MCF 10A (cell line): ENCODE measurements at regions of chr16 and their contacts with region 1.

Region 1: DNA sequence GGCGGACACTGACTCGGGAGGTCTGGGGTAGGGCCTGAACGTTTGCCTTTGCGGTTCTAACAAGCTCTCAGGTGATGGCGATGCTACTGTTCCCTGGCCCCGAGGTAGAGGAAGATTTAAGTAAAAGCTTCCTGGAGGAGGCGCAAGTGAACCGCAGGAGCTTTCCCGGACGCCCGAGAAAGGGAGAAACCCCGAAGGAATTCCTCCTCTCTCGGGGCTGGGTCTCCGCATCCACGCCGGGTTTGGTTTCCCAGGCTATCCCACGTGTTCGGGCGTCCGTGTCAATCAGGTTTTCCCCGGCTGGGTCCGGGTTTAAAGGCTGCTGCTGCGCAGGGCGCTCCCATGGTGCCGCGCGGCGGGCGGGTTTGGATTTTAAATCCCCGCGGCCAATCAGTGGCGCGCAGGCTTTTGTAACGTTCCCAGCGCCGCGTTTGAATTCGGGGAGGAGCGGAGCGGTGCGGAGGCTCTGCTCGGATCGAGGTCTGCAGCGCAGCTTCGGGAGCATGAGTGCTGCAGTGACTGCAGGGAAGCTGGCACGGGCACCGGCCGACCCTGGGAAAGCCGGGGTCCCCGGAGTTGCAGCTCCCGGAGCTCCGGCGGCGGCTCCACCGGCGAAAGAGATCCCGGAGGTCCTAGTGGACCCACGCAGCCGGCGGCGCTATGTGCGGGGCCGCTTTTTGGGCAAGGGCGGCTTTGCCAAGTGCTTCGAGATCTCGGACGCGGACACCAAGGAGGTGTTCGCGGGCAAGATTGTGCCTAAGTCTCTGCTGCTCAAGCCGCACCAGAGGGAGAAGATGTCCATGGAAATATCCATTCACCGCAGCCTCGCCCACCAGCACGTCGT is at the start of gene PLK1:
- DNase-seq: peak; percentile 94
- H3K4me3 Mint-ChIP-seq: peak within 1 kb of the TSS; percentile 87
- H3K27ac Mint-ChIP-seq: peak within 1 kb of the TSS; percentile 85
- H3K4me1 Mint-ChIP-seq: peaks cover 25% of the 10 kb centered on the region
- H3K27me3 Mint-ChIP-seq: no peaks in the 10 kb centered on the region
- CTCF ChIP-seq: peak; percentile 32
- total RNA-seq, gene PLK1: 50.7 and 74.8 TPM in 2 replicates

Region 2: DNA sequence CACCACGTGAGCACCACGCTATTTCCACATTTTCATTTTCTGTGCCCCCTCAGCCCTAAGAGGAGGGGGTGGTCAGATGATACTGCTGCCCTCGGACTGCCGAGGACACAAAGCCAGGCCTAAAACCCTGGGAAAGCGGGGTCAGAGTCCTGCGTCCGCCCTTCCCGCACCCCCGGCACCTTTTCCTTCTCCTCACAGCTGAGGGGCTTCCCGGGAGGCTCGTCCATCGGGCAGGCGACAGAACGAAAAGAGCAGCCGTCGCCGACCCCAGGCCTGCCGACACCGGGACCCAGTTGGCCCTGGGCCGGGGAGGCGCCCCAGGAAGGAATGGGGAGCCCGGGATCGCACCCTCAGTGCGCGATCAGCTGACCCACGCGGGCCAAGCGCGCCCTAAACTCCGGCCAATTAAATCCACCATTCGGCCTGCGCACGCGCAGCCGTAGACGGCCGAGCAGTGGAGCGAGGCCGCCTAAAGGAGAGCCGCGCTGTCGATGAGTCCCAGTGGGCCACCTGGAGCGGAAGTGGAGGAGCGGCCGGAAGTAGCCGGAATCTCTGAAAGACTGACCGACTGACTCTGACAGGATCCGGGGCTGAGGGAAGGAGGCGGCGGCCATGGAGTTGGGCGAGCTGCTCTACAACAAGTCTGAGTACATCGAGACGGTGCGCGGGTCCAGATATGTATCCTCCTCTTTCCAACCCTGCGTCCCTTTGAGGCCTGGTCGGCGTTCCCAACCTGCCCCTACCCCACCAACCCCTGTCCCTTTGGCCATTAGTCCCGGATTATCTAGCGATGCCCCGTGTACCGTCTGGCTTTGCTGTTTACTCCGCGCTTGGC is 37.5 kb before region 1 on chr16 and contains the starts of genes DCTN5 and PALB2:
- CTCF ChIA-PET with region 1: interaction called, 3 read pairs
- POLR2A ChIA-PET with region 1: interaction called, 13 read pairs
- intact Hi-C with region 1: no loop called
- DNase-seq: peak; percentile 95
- H3K4me3 Mint-ChIP-seq: peak within 1 kb of the TSS; percentile 91
- H3K27ac Mint-ChIP-seq: peak within 1 kb of the TSS; percentile 91
- H3K4me1 Mint-ChIP-seq: peaks cover 12% of the 10 kb centered on the region
- H3K27me3 Mint-ChIP-seq: no peaks in the 10 kb centered on the region
- CTCF ChIP-seq: no peak
- total RNA-seq, gene DCTN5: 66.6 and 84.8 TPM in 2 replicates
- total RNA-seq, gene PALB2: 13.7 and 20.8 TPM in 2 replicates

Region 3: GRCh38 chr16:23668225-23668624 is 10.4 kb before region 1 on chr16:
- CTCF ChIA-PET with region 1: interaction called, 20 read pairs
- POLR2A ChIA-PET with region 1: interaction called, 6 read pairs
- intact Hi-C with region 1: no loop called
- DNase-seq: no peak
- H3K4me3 Mint-ChIP-seq: no peak overlapping the region
- H3K27ac Mint-ChIP-seq: no peak overlapping the region
- H3K4me1 Mint-ChIP-seq: no peaks in the 10 kb centered on the region
- H3K27me3 Mint-ChIP-seq: no peaks in the 10 kb centered on the region
- CTCF ChIP-seq: no peak

Region 4: DNA sequence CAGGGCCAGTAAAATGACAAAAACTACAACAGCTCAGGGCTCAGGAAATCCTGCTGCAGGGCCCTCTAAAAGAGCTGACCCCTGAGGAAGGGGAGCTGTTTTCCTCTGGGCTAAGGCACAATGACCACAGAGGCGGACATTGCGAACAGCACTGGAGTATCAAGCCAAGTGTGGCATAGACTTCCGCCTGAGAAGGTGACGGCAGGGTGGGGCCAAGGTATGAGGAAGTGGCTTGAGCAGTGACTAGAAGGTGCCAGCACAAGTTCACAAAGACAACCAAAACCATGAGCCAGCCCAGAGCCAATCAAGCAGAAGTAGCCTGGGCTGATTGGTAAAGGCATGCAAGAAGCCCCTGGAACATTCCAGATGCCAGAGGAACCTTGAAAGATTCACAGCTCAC is 20.4 kb after region 1 on chr16:
- CTCF ChIA-PET with region 1: interaction called, 12 read pairs
- POLR2A ChIA-PET with region 1: interaction called, 4 read pairs
- intact Hi-C with region 1: no loop called
- DNase-seq: no peak
- H3K4me3 Mint-ChIP-seq: no peak overlapping the region
- H3K27ac Mint-ChIP-seq: no peak overlapping the region
- H3K4me1 Mint-ChIP-seq: no peaks in the 10 kb centered on the region
- H3K27me3 Mint-ChIP-seq: peaks cover 14% of the 10 kb centered on the region
- CTCF ChIP-seq: no peak

Region 5: GRCh38 chr16:23729503-23730424 is 51.1 kb after region 1 on chr16:
- CTCF ChIA-PET with region 1: interaction called, 28 read pairs
- POLR2A ChIA-PET with region 1: interaction called, 3 read pairs
- intact Hi-C with region 1: loop called (anchors 2 kb)
- DNase-seq: peak; percentile 78
- H3K4me3 Mint-ChIP-seq: no peak overlapping the region
- H3K27ac Mint-ChIP-seq: no peak overlapping the region
- H3K4me1 Mint-ChIP-seq: peaks cover 14% of the 10 kb centered on the region
- H3K27me3 Mint-ChIP-seq: no peaks in the 10 kb centered on the region
- CTCF ChIP-seq: no peak

Region 6: GRCh38 chr16:24036614-24037013 is 358.0 kb after region 1 on chr16:
- CTCF ChIA-PET with region 1: interaction called, 32 read pairs
- POLR2A ChIA-PET with region 1: no interaction called
- intact Hi-C with region 1: loop called (anchors 2 kb)
- DNase-seq: peak; percentile 55
- H3K4me3 Mint-ChIP-seq: no peak overlapping the region
- H3K27ac Mint-ChIP-seq: no peak overlapping the region
- H3K4me1 Mint-ChIP-seq: no peaks in the 10 kb centered on the region
- H3K27me3 Mint-ChIP-seq: peaks cover 38% of the 10 kb centered on the region
- CTCF ChIP-seq: peak; percentile 81